ENCODE measurements at regions of chr1 and their contacts with region 1.

Region 1: DNA sequence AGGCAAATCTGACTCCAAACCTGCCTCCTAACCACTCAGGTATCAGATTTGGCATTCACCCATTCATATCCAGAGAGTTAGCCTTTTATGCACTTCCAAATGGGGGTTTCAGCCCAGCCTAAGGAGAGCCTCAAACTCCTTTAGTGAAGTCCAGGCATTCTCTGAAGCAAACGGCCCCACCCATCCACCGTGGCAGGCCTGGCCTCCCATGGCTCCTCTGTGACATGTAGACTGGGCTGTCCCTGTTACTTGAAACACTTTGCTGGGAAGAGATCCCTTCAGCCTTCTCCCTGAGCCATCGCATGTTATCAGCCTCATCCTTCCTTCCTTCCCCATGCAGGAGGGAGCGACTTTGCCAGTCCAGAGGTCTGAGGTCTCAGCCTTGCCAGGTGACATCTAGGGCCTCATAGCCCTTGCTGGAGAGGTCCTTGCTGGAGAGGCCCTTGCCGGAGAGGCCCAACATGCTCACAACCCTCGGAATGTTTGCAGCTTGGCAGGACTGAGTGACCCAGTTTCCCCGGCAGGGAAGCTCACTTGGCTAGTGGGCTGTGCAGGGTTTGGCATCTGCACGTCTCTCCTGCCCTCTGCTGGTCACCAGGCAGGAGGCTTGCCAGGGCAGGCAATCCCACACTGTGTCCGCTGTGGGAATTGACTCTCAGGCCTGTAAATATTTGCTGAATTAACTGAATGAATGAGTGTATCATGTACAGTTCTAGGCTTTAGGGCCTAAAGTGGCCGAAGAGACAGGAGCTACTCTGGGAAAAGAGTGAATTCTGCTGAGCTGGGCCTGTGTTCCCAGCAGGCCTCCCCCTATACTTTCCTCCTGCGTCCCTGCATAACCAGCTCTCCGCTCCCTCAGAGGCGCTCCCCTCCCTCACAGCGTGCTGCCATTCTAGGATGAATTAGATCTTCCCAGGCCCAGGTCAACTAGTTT is 26.7 kb upstream of the RBM15 start:
- DNase-seq: peak; percentile 60 to 88 (median 72)
- ATAC-seq: peak; percentile 99 to 100
- H3K4me3 Mint-ChIP-seq: no peak overlapping the region
- H3K27ac Mint-ChIP-seq: peak overlapping the region in 3 of 10 donors; percentile 27 to 52 (median 35)
- H3K4me1 Mint-ChIP-seq: peaks cover 0 to 4% (median 2%) of the 10 kb centered on the region in 4 donors
- H3K27me3 Mint-ChIP-seq: peaks cover 0 to 2% (median 0%) of the 10 kb centered on the region in 5 donors

Region 2: GRCh38 chr1:110203021-110203661 is 109.3 kb before region 1 on chr1:
- POLR2A ChIA-PET with region 1: interaction called, 38 read pairs
- DNase-seq: peak; percentile 35 to 85 (median 74)
- ATAC-seq: peak; percentile 63 to 69
- H3K4me3 Mint-ChIP-seq: peak overlapping the region in 1 of 10 donors; percentile 44
- H3K27ac Mint-ChIP-seq: peak overlapping the region; percentile 23 to 92 (median 84)
- H3K4me1 Mint-ChIP-seq: peaks cover 14 to 27% (median 22%) of the 10 kb centered on the region in 4 donors
- H3K27me3 Mint-ChIP-seq: no peaks in the 10 kb centered on the region

Region 3: GRCh38 chr1:110209715-110210603 is 102.5 kb before region 1 on chr1 and contains the start of gene KCNC4:
- POLR2A ChIA-PET with region 1: interaction called, 38 read pairs
- DNase-seq: peak; percentile 78 to 96 (median 90)
- ATAC-seq: peak; percentile 82 to 88
- H3K4me3 Mint-ChIP-seq: peak within 1 kb of the TSS; percentile 84 to 94 (median 90)
- H3K27ac Mint-ChIP-seq: peak within 1 kb of the TSS; percentile 88 to 97 (median 96)
- H3K4me1 Mint-ChIP-seq: peaks cover 41 to 66% (median 54%) of the 10 kb centered on the region in 4 donors
- H3K27me3 Mint-ChIP-seq: no peaks in the 10 kb centered on the region
- polyA plus RNA-seq, gene KCNC4: 0.90 to 3.1 (median 1.9) TPM

Measured in naive thymus-derived CD8-positive, alpha-beta T cell (primary cell).